Activated T-helper 2 cell treated with anti-CD3 and anti-CD28 coated beads, Interferon-gamma antibody, Interleukin-2, Interleukin-4, amounts not matched to agents 10 μg/mL and 5 μg/mL and 100 μg/mL, durations not matched to agents 14 hours and 24 hours and 36 hours (primary cell): ENCODE measurements at regions of chr13 and their contacts with region 1.

Region 1: GRCh38 chr13:23741879-23742510 is 147.2 kb downstream of the MIPEP start:
- DNase-seq: no peak
- H3K4me3 Mint-ChIP-seq: no peak overlapping the region
- H3K27ac Mint-ChIP-seq: no peak overlapping the region
- H3K4me1 Mint-ChIP-seq: peaks cover 41% of the 10 kb centered on the region
- H3K27me3 Mint-ChIP-seq: peaks cover 17% of the 10 kb centered on the region

Region 2: DNA sequence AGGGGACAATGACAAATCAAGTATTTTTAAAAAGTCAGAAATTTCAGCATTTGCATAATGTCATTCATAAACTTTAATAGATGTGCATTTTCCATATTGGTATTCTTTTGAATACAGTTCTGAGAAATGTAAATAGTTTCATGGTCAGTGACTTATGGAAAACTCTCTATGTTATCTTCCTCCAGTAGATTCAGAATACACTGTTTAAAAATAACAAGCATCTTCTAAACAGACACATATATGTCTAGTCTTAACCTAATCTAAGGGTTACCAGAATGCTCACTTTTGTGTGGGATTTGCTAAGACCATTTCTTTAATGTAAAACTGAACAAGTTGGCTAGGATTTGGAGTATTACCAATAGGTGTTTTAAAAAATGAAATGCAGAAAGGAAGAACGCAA is 681.0 kb before region 1 on chr13:
- intact Hi-C with region 1: loop called (anchors 5 kb)
- DNase-seq: no peak
- H3K4me3 Mint-ChIP-seq: no peak overlapping the region
- H3K27ac Mint-ChIP-seq: no peak overlapping the region
- H3K4me1 Mint-ChIP-seq: no peaks in the 10 kb centered on the region
- H3K27me3 Mint-ChIP-seq: no peaks in the 10 kb centered on the region

Region 3: DNA sequence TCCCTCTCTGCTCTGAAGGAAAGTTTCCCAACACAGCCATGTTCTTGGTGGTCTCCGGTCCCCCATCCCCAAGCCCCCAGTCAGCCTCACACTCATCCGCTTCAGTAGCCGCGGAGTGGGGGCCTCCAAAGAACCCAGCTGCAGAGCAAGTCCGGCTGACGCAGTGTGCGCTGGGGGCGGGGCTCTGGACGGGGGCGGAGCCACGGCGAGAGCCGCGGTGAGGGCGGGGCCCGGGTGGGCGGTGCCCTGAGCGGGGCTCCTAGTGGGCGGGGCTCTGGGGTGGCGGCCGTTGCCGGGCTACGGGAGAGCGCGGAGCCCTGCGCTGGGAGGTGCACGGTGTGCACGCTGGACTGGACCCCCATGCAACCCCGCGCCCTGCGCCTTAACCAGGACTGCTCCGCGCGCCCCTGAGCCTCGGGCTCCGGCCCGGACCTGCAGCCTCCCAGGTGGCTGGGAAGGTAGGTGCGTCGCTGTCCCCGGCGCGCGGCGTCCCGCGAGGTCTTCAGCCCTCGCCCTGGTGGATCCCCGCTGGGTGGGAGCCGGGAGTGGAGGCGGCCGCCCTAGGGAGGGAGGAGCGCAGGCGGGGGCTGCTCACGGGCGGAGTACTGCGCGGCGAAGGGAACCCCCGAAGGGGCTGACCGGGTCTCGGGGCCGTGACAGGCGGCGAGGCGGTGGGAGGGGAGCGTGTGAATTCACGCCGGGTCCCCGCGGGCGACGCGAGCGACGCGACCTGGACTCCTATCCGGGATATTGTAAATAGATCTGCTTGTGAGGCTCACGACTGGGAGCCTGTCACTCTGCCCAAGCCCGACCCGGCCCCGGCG is 162.7 kb before region 1 on chr13:
- intact Hi-C with region 1: loop called (anchors 2 kb)
- DNase-seq: peak; percentile 88
- H3K4me3 Mint-ChIP-seq: peak overlapping the region; percentile 70
- H3K27ac Mint-ChIP-seq: no peak overlapping the region
- H3K4me1 Mint-ChIP-seq: peaks cover 15% of the 10 kb centered on the region
- H3K27me3 Mint-ChIP-seq: peaks cover 66% of the 10 kb centered on the region

Region 4: GRCh38 chr13:23794267-23795161 is 52.5 kb after region 1 on chr13:
- intact Hi-C with region 1: loop called (anchors 2 kb)
- DNase-seq: no peak
- H3K4me3 Mint-ChIP-seq: no peak overlapping the region
- H3K27ac Mint-ChIP-seq: no peak overlapping the region
- H3K4me1 Mint-ChIP-seq: peaks cover 12% of the 10 kb centered on the region
- H3K27me3 Mint-ChIP-seq: peaks cover 2% of the 10 kb centered on the region